ENCODE measurements at regions of chr3 and their contacts with region 1.

Region 1: DNA sequence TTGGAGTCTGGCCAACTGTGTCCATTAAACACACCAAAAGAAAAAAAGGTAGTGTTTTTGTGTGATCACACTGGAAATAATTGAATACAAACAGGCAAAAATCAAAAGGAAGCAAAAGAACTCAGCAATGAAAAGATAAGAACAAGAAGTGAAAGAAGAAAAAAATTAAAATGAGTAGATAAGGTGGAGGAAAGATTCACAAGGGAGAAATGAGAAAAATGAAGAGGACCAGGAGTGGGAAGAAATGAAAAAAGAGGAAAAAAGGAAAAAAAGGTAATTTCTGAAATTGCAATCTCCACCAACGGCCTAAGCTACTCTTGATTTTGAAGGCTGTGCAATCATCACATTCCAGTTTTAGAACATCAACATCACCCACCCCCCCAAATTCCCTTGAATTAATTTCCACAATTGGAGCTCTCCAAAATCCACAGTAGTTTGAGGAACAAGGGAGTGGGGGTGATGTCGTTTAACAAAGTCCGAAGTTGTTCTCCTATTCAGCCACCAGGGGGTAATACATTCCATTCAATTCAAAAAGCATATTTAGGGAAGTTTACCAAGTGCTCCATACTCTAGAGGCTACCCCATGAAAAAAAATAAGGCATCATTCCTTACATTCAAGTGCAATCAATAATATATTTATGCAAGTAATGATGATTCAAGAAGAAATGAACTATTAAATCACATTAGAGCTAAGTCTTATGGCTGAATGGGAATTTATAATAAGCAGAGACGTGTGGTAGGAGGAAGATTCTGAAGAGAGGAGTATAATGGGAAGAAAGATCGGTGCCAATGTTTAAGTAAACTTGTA is 37.4 kb downstream of the ZNF860 start:
- DNase-seq: no peak
- ATAC-seq: peak; percentile 81
- H3K4me3 Mint-ChIP-seq: no peak overlapping the region
- H3K27ac Mint-ChIP-seq: no peak overlapping the region; the same call in 1 of the 2 replicates
- H3K4me1 Mint-ChIP-seq: peaks cover 6% of the 10 kb centered on the region
- H3K27me3 Mint-ChIP-seq: no peaks in the 10 kb centered on the region; the same call in none of the 2 replicates
- CTCF ChIP-seq: peak; percentile 77

Region 2: DNA sequence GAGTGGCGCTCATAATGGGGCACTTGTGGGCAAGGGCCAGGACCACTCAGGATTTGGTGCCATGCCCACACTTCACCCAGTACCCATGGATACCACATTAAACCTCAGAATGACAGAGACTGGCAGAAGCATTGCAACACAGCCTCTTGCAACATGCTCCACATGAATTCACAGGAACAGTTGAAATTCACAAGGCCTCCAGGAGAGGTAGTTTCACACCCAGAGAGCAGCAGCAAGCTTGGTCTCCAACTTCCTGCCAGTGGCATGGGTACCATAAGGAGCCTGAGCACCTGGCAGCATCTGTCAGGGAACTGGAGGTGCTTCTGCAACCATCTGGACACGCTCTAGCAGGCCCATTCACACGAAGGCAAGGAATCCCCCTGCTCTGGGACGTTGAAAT is 138.9 kb before region 1 on chr3:
- CTCF ChIA-PET with region 1: no interaction called
- POLR2A ChIA-PET with region 1: no interaction called
- DNase-seq: no peak
- ATAC-seq: no peak
- H3K4me3 Mint-ChIP-seq: no peak overlapping the region
- H3K27ac Mint-ChIP-seq: no peak overlapping the region
- H3K4me1 Mint-ChIP-seq: peaks cover 51% of the 10 kb centered on the region
- H3K27me3 Mint-ChIP-seq: no peaks in the 10 kb centered on the region
- CTCF ChIP-seq: no peak

Region 3: GRCh38 chr3:32037929-32038267 is 18.9 kb after region 1 on chr3:
- CTCF ChIA-PET with region 1: interaction called, 14 read pairs
- POLR2A ChIA-PET with region 1: no interaction called
- DNase-seq: no peak
- ATAC-seq: no peak
- H3K4me3 Mint-ChIP-seq: no peak overlapping the region
- H3K27ac Mint-ChIP-seq: no peak overlapping the region
- H3K4me1 Mint-ChIP-seq: peaks cover 9% of the 10 kb centered on the region
- H3K27me3 Mint-ChIP-seq: peaks cover 6% of the 10 kb centered on the region; the same call in 1 of the 2 replicates
- CTCF ChIP-seq: no peak

Region 4: GRCh38 chr3:32143849-32144757 is 125.1 kb after region 1 on chr3:
- CTCF ChIA-PET with region 1: interaction called, 14 read pairs
- POLR2A ChIA-PET with region 1: no interaction called
- DNase-seq: peak; percentile 44
- ATAC-seq: peak; percentile 75
- H3K4me3 Mint-ChIP-seq: no peak overlapping the region
- H3K27ac Mint-ChIP-seq: no peak overlapping the region
- H3K4me1 Mint-ChIP-seq: peaks cover 25% of the 10 kb centered on the region
- H3K27me3 Mint-ChIP-seq: peaks cover 17% of the 10 kb centered on the region
- CTCF ChIP-seq: peak; percentile 53

Region 5: GRCh38 chr3:32154205-32154579 is 135.2 kb after region 1 on chr3:
- CTCF ChIA-PET with region 1: interaction called, 16 read pairs
- POLR2A ChIA-PET with region 1: no interaction called
- DNase-seq: peak; percentile 37
- ATAC-seq: peak; percentile 98
- H3K4me3 Mint-ChIP-seq: no peak overlapping the region
- H3K27ac Mint-ChIP-seq: no peak overlapping the region
- H3K4me1 Mint-ChIP-seq: peaks cover 15% of the 10 kb centered on the region
- H3K27me3 Mint-ChIP-seq: peaks cover 6% of the 10 kb centered on the region
- CTCF ChIP-seq: no peak; the same call in 1 of the 2 replicates

Region 6: DNA sequence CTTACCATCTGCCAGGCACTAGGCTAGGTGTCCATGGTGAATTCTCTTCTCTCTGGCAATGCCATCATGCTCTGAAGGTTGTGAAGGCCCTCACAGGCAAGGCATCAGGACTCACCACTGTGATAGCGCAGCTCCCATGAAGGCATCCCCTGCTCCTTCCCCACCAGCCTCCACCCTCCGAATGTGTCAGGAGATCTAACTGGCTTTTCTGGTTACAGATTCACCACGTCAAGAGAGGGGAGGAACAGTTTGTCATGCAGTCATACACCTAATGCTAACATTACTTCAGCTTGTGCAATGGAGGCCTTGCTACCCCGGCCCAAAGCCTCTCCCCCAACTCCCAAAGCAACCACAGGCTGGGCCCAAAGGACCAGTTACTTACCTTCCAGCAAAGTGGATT is 210.6 kb after region 1 on chr3:
- CTCF ChIA-PET with region 1: no interaction called
- POLR2A ChIA-PET with region 1: no interaction called
- DNase-seq: no peak
- ATAC-seq: no peak
- H3K4me3 Mint-ChIP-seq: no peak overlapping the region
- H3K27ac Mint-ChIP-seq: no peak overlapping the region
- H3K4me1 Mint-ChIP-seq: no peaks in the 10 kb centered on the region
- H3K27me3 Mint-ChIP-seq: no peaks in the 10 kb centered on the region; the same call in 1 of the 2 replicates
- CTCF ChIP-seq: no peak

Measured in WTC11 (cell line).